Naive thymus-derived CD4-positive, alpha-beta T cell (primary cell): ENCODE measurements at regions of chr2 and their contacts with region 1.

Region 1: GRCh38 chr2:105834931-105835330 is 90.2 kb downstream of the NCK2 start:
- DNase-seq: peak in 6 of 9 donors; percentile 56 to 80 (median 70)
- ATAC-seq: peak; percentile 59
- H3K4me3 ChIP-seq: no peak overlapping the region
- H3K4me3 Mint-ChIP-seq: peak overlapping the region; percentile 0 to 54 (median 30)
- H3K27ac ChIP-seq: peak overlapping the region; percentile 61
- H3K27ac Mint-ChIP-seq: peak overlapping the region; percentile 40 to 95 (median 78)
- H3K4me1 ChIP-seq: peaks cover 43 to 49% of the 10 kb centered on the region in 2 donors
- H3K4me1 Mint-ChIP-seq: peaks cover 45 to 96% (median 87%) of the 10 kb centered on the region in 7 donors
- H3K27me3 ChIP-seq: no peaks in the 10 kb centered on the region
- H3K27me3 Mint-ChIP-seq: no peaks in the 10 kb centered on the region

Region 2: GRCh38 chr2:105744091-105744908 is 90.6 kb before region 1 on chr2:
- CTCF ChIA-PET with region 1: no interaction called
- POLR2A ChIA-PET with region 1: interaction called, 3 read pairs
- intact Hi-C with region 1: loop called in 1 of 2 experiments (anchors 5 kb)
- DNase-seq: peak; percentile 57 to 79 (median 69)
- ATAC-seq: peak; percentile 87
- H3K4me3 ChIP-seq: peak overlapping the region; percentile 24
- H3K4me3 Mint-ChIP-seq: peak overlapping the region; percentile 76 to 96 (median 90)
- H3K27ac ChIP-seq: peak overlapping the region; percentile 80
- H3K27ac Mint-ChIP-seq: peak overlapping the region; percentile 90 to 96 (median 95)
- H3K4me1 ChIP-seq: peaks cover 48 to 54% of the 10 kb centered on the region in 2 donors
- H3K4me1 Mint-ChIP-seq: peaks cover 49 to 82% (median 77%) of the 10 kb centered on the region in 7 donors
- H3K27me3 ChIP-seq: no peaks in the 10 kb centered on the region
- H3K27me3 Mint-ChIP-seq: no peaks in the 10 kb centered on the region